Activated CD4-positive, alpha-beta T cell treated with anti-CD3 and anti-CD28 coated beads for 36 hours (primary cell): ENCODE measurements at regions of chr16 and their contacts with region 1.

Region 1: DNA sequence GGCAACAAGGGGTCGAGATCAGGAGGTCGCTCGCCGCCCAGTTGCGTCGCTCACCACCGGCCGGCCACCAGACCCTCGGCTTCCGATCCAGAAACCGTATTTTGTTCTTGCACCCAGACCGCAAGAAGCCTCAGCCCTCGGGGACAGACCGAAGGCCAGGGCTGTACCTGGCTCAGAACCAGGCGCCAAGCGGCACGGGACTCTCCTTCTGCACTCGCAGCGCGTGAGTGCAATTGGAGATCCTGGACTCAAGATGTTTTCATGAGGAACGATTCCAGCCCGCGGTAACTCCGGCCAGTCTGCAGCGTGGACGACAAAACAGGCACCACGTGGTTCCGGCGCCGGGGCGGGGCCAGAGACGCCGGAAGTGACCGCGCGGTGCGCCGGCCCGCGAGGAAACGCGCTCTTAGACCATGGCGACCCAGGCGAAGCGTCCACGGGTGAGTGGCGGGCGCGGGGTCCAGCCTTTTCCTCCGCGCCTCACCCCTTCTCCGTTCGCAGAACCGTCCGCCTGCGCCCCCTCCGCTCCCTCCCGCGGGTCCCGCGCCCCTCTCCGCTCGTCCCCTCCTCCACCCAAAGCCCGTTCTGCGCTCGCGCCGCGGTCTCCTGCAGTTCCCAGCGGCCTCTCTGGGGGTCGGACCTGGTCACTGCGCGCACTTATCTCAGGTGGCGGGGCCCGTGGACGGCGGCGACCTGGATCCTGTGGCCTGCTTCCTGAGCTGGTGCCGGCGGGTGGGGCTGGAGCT is at the start of gene SETD6:
- DNase-seq: peak; percentile 87
- ATAC-seq: peak; percentile 72
- H3K4me3 Mint-ChIP-seq: peak within 1 kb of the TSS; percentile 92
- H3K27ac Mint-ChIP-seq: peak within 1 kb of the TSS; percentile 86
- H3K4me1 Mint-ChIP-seq: peaks cover 49% of the 10 kb centered on the region
- H3K27me3 Mint-ChIP-seq: no peaks in the 10 kb centered on the region
- total RNA-seq, gene SETD6: 13.8 to 15.1 TPM

Region 2: DNA sequence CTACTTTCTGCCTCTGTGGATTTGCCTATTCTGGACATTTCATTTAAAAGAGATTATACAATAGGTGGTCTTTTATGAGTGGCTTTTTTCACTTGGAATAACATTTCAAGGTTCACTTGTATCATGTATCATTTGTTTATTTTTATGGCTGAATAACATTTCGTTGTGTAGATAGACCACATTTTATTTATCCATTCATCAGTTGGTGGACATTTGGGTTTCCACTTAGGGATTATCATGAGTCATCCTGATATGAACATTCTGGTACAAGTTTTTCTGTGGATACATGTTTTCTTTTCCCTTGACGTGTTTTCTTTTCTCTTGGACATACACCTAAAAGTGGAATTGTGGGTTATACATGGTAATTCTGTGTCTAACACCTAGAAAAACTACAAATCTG is 245.8 kb before region 1 on chr16:
- CTCF ChIA-PET with region 1: no interaction called
- POLR2A ChIA-PET with region 1: no interaction called
- intact Hi-C with region 1: no loop called
- DNase-seq: no peak
- ATAC-seq: no peak
- H3K4me3 Mint-ChIP-seq: no peak overlapping the region
- H3K27ac Mint-ChIP-seq: no peak overlapping the region
- H3K4me1 Mint-ChIP-seq: peaks cover 7% of the 10 kb centered on the region
- H3K27me3 Mint-ChIP-seq: peaks cover 2% of the 10 kb centered on the region

Region 3: GRCh38 chr16:58459344-58460218 is 55.7 kb before region 1 on chr16:
- CTCF ChIA-PET with region 1: no interaction called
- POLR2A ChIA-PET with region 1: no interaction called
- intact Hi-C with region 1: no loop called
- DNase-seq: peak; percentile 82
- ATAC-seq: peak; percentile 93
- H3K4me3 Mint-ChIP-seq: no peak overlapping the region
- H3K27ac Mint-ChIP-seq: no peak overlapping the region
- H3K4me1 Mint-ChIP-seq: peaks cover 7% of the 10 kb centered on the region
- H3K27me3 Mint-ChIP-seq: peaks cover 29% of the 10 kb centered on the region

Region 4: GRCh38 chr16:58494981-58495520 is 20.2 kb before region 1 on chr16:
- CTCF ChIA-PET with region 1: interaction called, 6 read pairs
- POLR2A ChIA-PET with region 1: no interaction called
- intact Hi-C with region 1: loop called in 1 of 2 experiments (anchors 2 kb)
- DNase-seq: peak; percentile 91
- ATAC-seq: peak; percentile 76
- H3K4me3 Mint-ChIP-seq: peak overlapping the region; percentile 17
- H3K27ac Mint-ChIP-seq: peak overlapping the region; percentile 37
- H3K4me1 Mint-ChIP-seq: peaks cover 19% of the 10 kb centered on the region
- H3K27me3 Mint-ChIP-seq: no peaks in the 10 kb centered on the region

Region 5: DNA sequence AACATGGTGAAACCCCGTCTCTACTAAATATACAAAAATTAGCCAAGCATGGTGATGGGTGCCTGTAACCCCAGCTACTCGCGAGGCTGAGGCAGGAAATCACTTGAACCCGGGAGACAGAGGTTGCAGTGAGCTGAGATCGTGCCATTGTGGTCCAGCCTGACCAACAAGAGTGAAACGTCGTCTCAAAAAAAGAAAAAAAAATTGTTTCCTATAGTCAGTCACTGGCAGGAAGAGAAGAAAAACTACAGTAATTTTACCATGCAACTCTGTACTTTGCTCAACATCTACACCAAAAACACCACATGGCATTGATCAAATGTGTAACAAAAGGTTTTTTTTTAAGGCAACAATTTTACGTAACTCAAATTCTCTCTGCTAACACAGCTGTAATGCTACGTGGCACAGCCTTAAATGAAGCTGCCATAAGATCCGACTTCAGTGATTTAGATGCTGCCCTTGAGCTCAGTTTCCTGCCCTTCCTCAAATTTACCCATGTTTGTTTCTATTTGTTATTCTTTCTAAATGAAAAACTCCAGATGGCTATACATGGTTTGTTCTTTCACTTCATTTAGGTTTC is 74.1 kb after region 1 on chr16:
- CTCF ChIA-PET with region 1: interaction called, 4 read pairs
- POLR2A ChIA-PET with region 1: no interaction called
- intact Hi-C with region 1: loop called (anchors 5 kb)
- DNase-seq: no peak
- ATAC-seq: no peak
- H3K4me3 Mint-ChIP-seq: no peak overlapping the region
- H3K27ac Mint-ChIP-seq: peak overlapping the region; percentile 24
- H3K4me1 Mint-ChIP-seq: peaks cover 18% of the 10 kb centered on the region
- H3K27me3 Mint-ChIP-seq: no peaks in the 10 kb centered on the region

Region 6: GRCh38 chr16:58661199-58661830 is 146.0 kb after region 1 on chr16:
- CTCF ChIA-PET with region 1: interaction called, 7 read pairs
- POLR2A ChIA-PET with region 1: no interaction called
- intact Hi-C with region 1: loop called (anchors 1 to 5 kb)
- DNase-seq: peak; percentile 35
- ATAC-seq: peak; percentile 91
- H3K4me3 Mint-ChIP-seq: no peak overlapping the region
- H3K27ac Mint-ChIP-seq: no peak overlapping the region
- H3K4me1 Mint-ChIP-seq: no peaks in the 10 kb centered on the region
- H3K27me3 Mint-ChIP-seq: peaks cover 6% of the 10 kb centered on the region

Region 7: DNA sequence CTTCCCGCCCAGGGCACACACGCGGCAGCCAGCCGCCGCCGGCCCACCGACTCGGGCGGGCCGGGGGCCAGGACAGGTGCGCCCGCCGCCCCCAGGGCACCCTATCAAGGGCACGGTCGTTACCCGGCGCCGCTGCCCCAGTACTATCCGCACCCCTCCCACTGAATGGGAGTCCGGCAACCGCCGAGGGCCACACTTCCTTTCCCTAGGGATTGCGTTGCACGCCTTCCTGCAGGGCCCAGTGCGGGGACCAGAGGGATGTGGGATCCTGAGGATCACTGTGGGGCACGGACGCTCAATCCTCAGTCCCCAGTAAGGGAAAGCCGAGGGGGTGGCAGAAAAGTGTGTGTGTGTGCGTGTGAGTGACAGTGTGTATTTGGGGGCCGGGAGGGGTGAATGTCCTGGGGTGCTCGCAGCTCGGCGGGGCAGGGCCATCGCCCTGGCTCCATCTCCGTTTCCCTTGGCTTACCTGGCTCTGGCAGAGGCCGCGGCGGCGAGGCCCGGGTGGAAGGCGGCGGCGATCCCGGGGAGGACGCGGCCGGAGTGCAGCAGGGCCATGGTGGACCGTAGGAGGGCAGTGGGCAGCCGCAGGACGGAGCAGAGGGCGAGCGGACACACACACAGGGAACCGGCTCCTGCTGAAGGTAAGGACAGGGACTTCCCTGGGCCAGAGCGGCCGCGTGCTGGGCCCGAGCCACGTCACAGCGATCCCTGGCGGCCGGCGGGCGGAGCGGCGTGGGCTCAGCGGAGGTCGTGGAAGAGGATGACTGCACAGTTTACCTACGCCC is 218.6 kb after region 1 on chr16 and contains the start of gene GOT2:
- CTCF ChIA-PET with region 1: interaction called, 3 read pairs
- POLR2A ChIA-PET with region 1: no interaction called
- intact Hi-C with region 1: loop called (anchors 1 to 5 kb)
- DNase-seq: peak; percentile 90
- ATAC-seq: peak; percentile 92
- H3K4me3 Mint-ChIP-seq: peak within 1 kb of the TSS; percentile 92
- H3K27ac Mint-ChIP-seq: peak within 1 kb of the TSS; percentile 97
- H3K4me1 Mint-ChIP-seq: peaks cover 42% of the 10 kb centered on the region
- H3K27me3 Mint-ChIP-seq: no peaks in the 10 kb centered on the region
- total RNA-seq, gene GOT2: 128 to 133 TPM